Heart left ventricle (tissue), 16 donors: ENCODE measurements at regions of chr2 and their contacts with region 1.

Region 1: GRCh38 chr2:133171393-133172004 is 396.8 kb downstream of the NCKAP5 start:
- DNase-seq: no peak
- ATAC-seq: no peak
- H3K4me3 ChIP-seq: no peak overlapping the region
- H3K27ac ChIP-seq: no peak overlapping the region
- H3K4me1 ChIP-seq: no peaks in the 10 kb centered on the region
- H3K27me3 ChIP-seq: no peaks in the 10 kb centered on the region
- CTCF ChIP-seq: peak in 11 of 12 donors; percentile 27 to 63 (median 44)
- POLR2A ChIP-seq: no peak

Region 2: DNA sequence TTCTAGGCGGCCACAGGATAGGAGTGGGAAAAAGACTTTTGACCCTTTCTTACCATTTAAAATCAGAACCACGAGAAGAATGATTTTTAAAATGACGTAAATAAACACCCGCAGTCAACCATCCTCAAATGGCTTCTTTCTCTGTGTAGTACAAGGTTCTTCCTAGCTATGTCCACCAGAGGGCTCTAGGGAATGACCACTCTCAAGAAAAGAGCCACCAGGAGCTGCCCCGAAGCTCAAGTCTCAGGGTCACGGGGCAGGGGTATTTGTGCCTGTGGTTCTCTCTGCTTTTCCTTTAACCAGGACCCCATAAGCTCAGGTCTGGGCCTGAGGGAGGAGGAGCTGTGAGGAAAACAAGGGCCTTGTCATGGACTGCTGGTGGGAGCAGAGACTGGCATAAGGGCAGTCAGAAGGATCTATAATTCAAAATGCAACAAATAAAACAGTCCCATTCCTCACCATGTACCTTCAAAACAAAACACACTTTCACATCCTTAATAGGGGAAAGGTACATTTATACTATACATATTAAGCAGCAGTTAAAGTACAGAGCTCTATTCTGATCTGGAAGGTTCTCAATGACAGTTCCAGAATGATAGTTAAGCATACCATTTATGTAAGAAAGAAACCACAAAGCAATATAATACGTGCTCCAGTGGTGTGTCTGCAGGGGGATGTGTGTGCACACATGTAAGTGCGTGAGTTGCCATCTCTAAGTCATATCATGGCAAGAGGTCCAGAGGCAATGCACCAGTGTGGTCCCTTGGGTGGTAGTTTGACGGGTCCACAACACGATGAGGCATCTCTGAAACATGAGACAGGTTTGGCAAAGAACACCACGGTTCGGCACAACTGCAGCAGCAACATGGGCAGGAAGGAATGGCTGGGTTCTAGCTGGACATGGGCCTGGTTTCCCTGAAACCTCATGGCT is 520.1 kb before region 1 on chr2:
- intact Hi-C with region 1: loop called in 3 of 10 experiments (anchors 10 kb)
- DNase-seq: no peak
- ATAC-seq: peak in 1 of 4 donors; percentile 57
- H3K4me3 ChIP-seq: no peak overlapping the region
- H3K27ac ChIP-seq: no peak overlapping the region
- H3K4me1 ChIP-seq: no peaks in the 10 kb centered on the region
- H3K27me3 ChIP-seq: peaks cover 0 to 9% (median 0%) of the 10 kb centered on the region in 9 donors
- CTCF ChIP-seq: peak in 9 of 12 donors; percentile 24 to 73 (median 49)
- POLR2A ChIP-seq: no peak

Region 3: GRCh38 chr2:133919285-133919684 is 747.8 kb after region 1 on chr2:
- intact Hi-C with region 1: no loop called
- DNase-seq: no peak
- ATAC-seq: no peak
- H3K4me3 ChIP-seq: no peak overlapping the region
- H3K27ac ChIP-seq: no peak overlapping the region
- H3K4me1 ChIP-seq: no peaks in the 10 kb centered on the region
- H3K27me3 ChIP-seq: peaks cover 0 to 3% (median 0%) of the 10 kb centered on the region in 9 donors
- CTCF ChIP-seq: no peak
- POLR2A ChIP-seq: no peak